ENCODE measurements at regions of chr11 and their contacts with region 1.

Region 1: DNA sequence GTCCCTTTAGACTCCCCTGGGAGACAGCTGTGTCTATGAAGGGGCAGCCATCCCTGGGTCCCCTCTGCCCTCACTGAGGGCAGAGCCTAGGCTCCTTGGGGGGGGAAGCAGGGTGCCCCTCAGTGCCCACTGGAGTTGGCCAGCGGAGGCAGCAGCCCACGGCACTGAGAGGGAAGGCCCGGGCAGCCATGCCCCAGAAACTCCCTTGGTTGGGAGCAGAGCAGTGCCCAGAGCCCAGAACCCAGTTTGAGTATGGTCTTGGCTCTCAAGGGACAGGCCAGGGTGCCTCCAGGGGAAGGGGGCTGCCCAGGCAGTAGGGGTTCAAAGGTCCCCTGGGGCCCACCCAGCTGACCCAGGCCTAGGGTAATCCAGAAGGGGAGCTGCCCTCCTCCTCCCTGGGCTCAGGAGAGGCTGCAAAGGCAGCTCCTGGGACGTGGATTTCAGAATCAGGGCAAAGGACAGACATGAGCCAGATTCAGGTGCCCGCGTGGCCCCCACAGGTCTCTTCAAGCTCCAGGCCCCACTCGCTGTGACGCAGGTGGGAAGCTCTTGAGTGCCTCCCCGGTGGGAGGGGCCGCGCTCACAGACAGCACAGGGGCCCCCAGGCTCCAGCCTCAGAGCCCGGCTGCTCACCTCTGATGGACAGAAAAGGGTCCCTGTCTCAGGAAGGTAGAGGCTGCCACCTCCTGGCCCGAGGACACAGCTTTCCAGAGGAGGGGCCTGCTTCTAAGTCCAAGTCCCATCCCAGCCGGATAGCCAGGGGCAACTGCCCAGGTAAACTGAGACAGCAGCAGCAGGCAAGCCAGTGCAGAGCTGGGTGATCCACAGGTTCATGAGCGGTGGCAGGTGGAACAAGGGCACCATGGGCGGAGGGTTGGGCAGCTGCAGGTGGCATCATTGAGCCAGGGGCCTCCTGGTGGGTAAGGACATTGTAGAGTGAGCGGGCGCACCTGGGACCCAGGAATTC is 2.6 kb downstream of the C11orf21 start:
- DNase-seq: peak; percentile 54
- ATAC-seq: no peak
- H3K4me3 Mint-ChIP-seq: peak overlapping the region; percentile 40
- H3K27ac Mint-ChIP-seq: peak overlapping the region; percentile 72
- H3K4me1 Mint-ChIP-seq: peaks cover 36% of the 10 kb centered on the region
- H3K27me3 Mint-ChIP-seq: no peaks in the 10 kb centered on the region

Region 2: DNA sequence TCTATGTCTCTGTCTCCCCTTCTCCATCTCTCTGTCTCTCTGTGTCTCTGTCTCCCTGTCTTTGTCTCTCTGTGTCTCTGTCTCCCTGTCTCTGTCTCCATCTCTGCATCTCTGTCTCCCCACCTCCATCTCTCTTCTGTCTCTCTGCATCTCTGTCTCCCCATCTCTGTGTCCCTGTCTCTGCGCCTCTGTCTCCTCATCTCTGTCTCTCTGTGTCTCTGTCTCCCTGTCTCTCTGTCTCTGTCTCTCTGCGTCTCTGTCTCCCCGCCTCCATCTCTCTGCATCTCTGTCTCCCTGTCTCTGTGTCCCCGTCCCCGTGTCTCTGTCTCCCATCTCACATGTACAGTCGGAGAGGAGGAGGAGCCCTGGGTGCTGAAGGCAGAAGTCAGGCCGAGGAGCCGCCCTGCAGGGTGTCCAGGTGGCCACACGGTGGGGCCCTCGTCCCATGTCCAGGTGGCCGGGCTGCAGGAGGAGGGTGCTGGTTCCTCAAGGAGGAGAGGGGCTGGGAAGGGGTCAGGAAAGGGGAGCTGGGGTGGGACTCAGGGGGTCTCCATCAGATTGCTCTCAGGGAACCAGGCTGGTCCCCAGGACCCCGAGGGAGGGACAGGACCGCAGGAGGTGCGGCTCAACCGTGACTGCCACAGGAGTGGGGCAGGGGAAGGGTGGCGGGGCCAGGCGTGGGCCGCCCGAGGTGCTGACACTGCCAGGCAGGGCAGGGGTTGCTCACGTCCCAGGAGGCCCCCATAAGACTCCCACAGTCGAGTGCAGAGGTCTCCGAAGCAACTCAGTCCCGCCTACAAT is 101.9 kb before region 1 on chr11:
- CTCF ChIA-PET with region 1: interaction called, 27 read pairs
- DNase-seq: peak; percentile 83
- ATAC-seq: peak; percentile 86
- H3K4me3 Mint-ChIP-seq: no peak overlapping the region
- H3K27ac Mint-ChIP-seq: no peak overlapping the region
- H3K4me1 Mint-ChIP-seq: peaks cover 3% of the 10 kb centered on the region
- H3K27me3 Mint-ChIP-seq: peaks cover 9% of the 10 kb centered on the region

Region 3: GRCh38 chr11:2314525-2315394 is 15.7 kb after region 1 on chr11:
- CTCF ChIA-PET with region 1: interaction called, 11 read pairs
- DNase-seq: no peak
- ATAC-seq: no peak
- H3K4me3 Mint-ChIP-seq: no peak overlapping the region
- H3K27ac Mint-ChIP-seq: no peak overlapping the region
- H3K4me1 Mint-ChIP-seq: no peaks in the 10 kb centered on the region
- H3K27me3 Mint-ChIP-seq: no peaks in the 10 kb centered on the region

Region 4: DNA sequence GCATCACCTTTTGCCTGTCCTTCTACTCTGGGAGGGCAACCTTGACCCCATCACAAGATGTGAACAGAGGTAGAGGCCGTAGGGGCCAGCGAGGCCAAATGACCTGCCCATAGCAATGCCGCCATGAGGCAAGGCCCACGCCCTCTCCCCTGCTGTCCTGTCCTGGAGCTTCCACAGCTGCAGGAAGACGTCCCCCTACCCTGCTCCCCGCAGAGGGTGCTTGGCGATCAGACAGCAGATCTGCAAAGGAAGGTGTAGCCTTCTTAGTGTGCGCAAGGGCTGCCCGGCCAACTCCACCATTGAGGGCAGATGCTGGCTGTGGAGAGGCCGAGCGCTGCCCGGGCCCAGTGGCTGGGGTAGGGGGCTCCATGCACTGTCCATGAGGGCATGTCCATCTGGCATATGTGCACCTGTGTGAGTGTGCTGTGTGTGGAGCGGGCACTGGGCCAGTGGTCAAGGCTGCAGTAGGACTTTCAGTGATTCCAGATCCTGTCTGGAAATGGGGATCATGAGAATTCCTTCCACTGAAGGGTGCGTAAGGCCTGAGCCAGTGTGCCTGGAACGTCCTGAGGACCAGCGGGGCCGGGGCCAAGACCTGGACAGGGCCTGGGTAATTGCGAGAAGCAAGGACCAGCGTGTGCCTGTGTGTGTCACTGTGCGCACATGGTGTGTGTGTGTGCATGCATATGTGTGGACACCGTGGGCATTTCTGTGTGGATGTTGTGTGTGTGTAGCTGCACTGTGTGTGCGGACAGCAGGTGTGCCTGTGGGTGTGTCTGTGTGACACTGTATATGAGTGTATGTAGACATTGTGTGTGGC is 134.2 kb after region 1 on chr11:
- CTCF ChIA-PET with region 1: no interaction called
- DNase-seq: no peak
- ATAC-seq: no peak
- H3K4me3 Mint-ChIP-seq: no peak overlapping the region
- H3K27ac Mint-ChIP-seq: no peak overlapping the region
- H3K4me1 Mint-ChIP-seq: no peaks in the 10 kb centered on the region
- H3K27me3 Mint-ChIP-seq: no peaks in the 10 kb centered on the region

Measured in activated CD8-positive, alpha-beta memory T cell treated with anti-CD3 and anti-CD28 coated beads, Interleukin-2, amount 10 ng/mL, durations not matched to agents 7 days and 5 days (primary cell).